OCI-LY7 (cell line): ENCODE measurements at regions of chr12 and their contacts with region 1.

Region 1: DNA sequence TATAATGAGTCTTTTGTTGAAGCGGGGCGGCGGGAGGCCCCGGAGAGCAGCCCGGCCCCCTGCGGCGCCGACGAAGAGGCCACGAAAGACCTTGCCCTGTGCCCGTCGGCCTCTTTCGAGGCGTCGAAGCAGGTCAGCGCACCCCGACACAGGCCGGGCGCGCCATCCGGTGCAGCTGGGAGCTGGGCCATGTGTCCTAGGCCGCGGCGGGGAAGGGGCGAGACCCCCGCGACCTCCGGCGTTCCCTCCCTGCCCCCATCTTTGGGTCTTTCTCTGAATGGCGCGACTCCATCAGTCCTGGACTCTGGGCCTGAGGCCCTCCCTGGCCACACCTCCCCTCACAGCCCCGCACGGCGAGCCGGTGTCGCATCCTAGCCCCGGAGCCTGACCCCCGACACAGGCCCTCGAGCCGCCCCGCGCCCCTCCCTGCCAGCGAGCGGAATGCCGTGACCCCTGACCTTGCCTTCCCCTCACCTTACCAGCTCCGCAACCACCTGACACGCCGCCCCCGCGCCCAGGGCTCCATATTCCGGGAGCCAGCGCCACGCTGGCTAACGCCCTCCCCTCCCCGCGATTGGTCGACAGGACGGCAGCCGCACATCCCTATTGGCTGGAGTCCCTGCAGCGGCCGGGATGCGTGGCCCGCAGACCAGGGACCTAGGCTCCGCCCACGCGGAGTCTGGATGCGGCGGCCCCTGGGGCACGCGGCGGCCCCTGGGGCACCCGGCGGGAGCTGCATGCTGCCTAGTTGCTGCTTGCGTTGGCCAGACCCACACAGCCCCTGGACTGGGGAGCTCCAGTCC is at the start of gene SLC11A2:
- DNase-seq: peak; percentile 94
- H3K4me3 ChIP-seq: peak within 1 kb of the TSS; percentile 90
- H3K27ac ChIP-seq: peak within 1 kb of the TSS; percentile 33
- H3K4me1 ChIP-seq: peaks cover 40% of the 10 kb centered on the region
- CTCF ChIP-seq: no peak
- total RNA-seq, gene SLC11A2: 28.2 and 35.0 TPM in 2 replicates

Region 2: DNA sequence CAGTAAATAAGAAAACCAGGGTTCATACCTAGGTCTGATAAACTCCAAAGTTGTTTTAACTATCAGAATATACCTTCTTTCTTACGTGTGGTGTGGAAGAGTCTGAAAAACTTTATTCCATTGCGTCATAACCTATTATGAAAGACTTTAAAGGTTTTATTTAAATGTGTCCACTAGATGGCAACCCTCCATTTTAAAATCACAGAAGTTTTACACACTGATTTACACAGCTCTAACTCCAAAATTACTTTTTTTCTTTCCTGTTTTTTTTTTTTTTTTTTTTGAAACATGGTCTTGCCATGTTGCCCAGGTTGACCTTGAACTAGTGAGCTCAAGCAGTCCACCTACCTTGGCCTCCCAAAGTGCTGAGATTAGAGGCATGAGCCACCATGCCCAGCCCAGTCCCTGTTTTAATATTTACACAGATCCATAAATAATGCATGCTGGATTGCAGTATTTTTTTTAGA is 200.6 kb before region 1 on chr12:
- CTCF ChIA-PET with region 1: interaction called, 3 read pairs
- POLR2A ChIA-PET with region 1: interaction called, 3 read pairs
- intact Hi-C with region 1: loop called (anchors 2 kb)
- DNase-seq: peak; percentile 76
- H3K4me3 ChIP-seq: no peak overlapping the region
- H3K27ac ChIP-seq: no peak overlapping the region
- H3K4me1 ChIP-seq: no peaks in the 10 kb centered on the region
- CTCF ChIP-seq: peak; percentile 77